ENCODE measurements at regions of chr6 and their contacts with region 1.

Region 1: DNA sequence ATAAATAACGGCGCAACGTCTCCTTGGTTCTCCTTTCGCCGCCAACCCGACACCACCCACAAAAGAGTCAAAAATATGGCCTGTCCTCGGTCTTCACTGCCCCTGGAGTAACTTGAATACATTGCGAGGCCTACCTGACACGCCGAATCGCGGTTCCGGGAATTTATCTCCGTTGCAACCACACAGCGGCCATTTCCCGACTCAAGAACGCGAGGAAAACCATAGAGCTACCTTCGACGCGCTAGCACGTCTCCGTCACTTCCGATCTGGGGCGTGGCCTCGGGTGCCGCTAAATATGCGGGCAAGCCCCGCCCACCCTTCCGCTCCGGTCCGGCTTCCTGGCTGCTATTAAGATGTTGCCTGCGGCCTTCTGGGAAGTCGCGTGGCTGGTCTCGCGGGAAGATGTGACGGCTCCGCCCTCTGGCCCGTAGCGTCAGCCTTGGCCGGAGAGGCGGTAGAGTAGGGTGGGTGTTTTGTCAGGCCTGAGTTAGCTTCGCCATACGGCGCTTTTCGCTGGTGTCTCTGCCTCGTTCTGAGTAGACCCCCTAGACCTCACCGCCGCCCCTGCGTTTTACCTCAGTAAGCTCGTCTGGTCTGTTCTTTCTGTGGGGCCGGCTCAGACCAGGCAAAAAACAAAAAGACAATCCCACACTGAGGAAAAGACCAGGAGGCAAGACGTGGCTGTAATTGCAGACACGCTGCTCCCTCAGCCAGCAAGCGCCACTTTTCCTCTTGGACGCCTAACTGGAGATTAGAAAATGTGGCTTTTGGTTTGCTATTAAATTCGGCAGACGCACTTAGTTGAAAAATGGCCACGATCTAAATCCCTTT is at the start of gene BCLAF1:
- DNase-seq: peak; percentile 95 to 100 (median 96)
- ATAC-seq: peak; percentile 93
- H3K4me3 ChIP-seq: peak within 1 kb of the TSS; percentile 75
- H3K27ac ChIP-seq: peak within 1 kb of the TSS; percentile 100
- H3K4me1 ChIP-seq: peaks cover 13 to 14% of the 10 kb centered on the region in 2 experiments
- H3K27me3 ChIP-seq: no peaks in the 10 kb centered on the region
- CTCF ChIP-seq: no peak
- EP300 ChIP-seq: peak; percentile 37; the same call in 1 of the 2 replicates
- POLR2A ChIP-seq: peak; percentile 99
- RAD21 ChIP-seq: peak in 1 of 2 experiments; percentile 30; a peak in 1 of 4 replicates
- polyA plus RNA-seq, gene BCLAF1: 65.4 to 87.3 TPM

Region 2: GRCh38 chr6:136160250-136160649 is 129.5 kb before region 1 on chr6:
- CTCF ChIA-PET with region 1: no interaction called
- POLR2A ChIA-PET with region 1: no interaction called
- in situ Hi-C with region 1: no loop called
- intact Hi-C with region 1: no loop called
- DNase-seq: no peak
- ATAC-seq: no peak
- H3K4me3 ChIP-seq: no peak overlapping the region
- H3K27ac ChIP-seq: no peak overlapping the region
- H3K4me1 ChIP-seq: no peaks in the 10 kb centered on the region
- H3K27me3 ChIP-seq: peaks cover 4 to 10% of the 10 kb centered on the region in 2 experiments; a peak in 4 of 5 replicates
- CTCF ChIP-seq: no peak
- EP300 ChIP-seq: no peak
- POLR2A ChIP-seq: no peak
- RAD21 ChIP-seq: no peak

Region 3: GRCh38 chr6:136235217-136235532 is 54.6 kb before region 1 on chr6:
- CTCF ChIA-PET with region 1: no interaction called
- POLR2A ChIA-PET with region 1: interaction called, 74 read pairs
- in situ Hi-C with region 1: no loop called
- intact Hi-C with region 1: loop called (anchors 2 kb)
- DNase-seq: no peak
- ATAC-seq: no peak
- H3K4me3 ChIP-seq: no peak overlapping the region
- H3K27ac ChIP-seq: peak overlapping the region; percentile 10; the same call in 1 of the 3 replicates
- H3K4me1 ChIP-seq: peaks cover 17 to 37% of the 10 kb centered on the region in 2 experiments
- H3K27me3 ChIP-seq: no peaks in the 10 kb centered on the region
- CTCF ChIP-seq: no peak
- EP300 ChIP-seq: no peak
- POLR2A ChIP-seq: no peak
- RAD21 ChIP-seq: no peak

Region 4: GRCh38 chr6:136262940-136263339 is 26.9 kb before region 1 on chr6:
- CTCF ChIA-PET with region 1: no interaction called
- POLR2A ChIA-PET with region 1: interaction called, 176 read pairs
- in situ Hi-C with region 1: no loop called
- intact Hi-C with region 1: no loop called
- DNase-seq: no peak
- ATAC-seq: no peak; the same call in 2 of the 3 replicates
- H3K4me3 ChIP-seq: no peak overlapping the region
- H3K27ac ChIP-seq: no peak overlapping the region
- H3K4me1 ChIP-seq: no peaks in the 10 kb centered on the region
- H3K27me3 ChIP-seq: no peaks in the 10 kb centered on the region
- CTCF ChIP-seq: no peak
- EP300 ChIP-seq: no peak
- POLR2A ChIP-seq: no peak
- RAD21 ChIP-seq: no peak

Region 5: GRCh38 chr6:136306466-136306865 is 16.7 kb after region 1 on chr6:
- CTCF ChIA-PET with region 1: no interaction called
- POLR2A ChIA-PET with region 1: interaction called, 55 read pairs
- in situ Hi-C with region 1: no loop called
- intact Hi-C with region 1: no loop called
- DNase-seq: no peak
- ATAC-seq: no peak
- H3K4me3 ChIP-seq: no peak overlapping the region
- H3K27ac ChIP-seq: no peak overlapping the region
- H3K4me1 ChIP-seq: peaks cover 0 to 4% of the 10 kb centered on the region in 2 experiments; a peak in 2 of 5 replicates
- H3K27me3 ChIP-seq: no peaks in the 10 kb centered on the region; a peak in 1 of 5 replicates
- CTCF ChIP-seq: no peak
- EP300 ChIP-seq: no peak
- POLR2A ChIP-seq: no peak
- RAD21 ChIP-seq: no peak

Region 6: DNA sequence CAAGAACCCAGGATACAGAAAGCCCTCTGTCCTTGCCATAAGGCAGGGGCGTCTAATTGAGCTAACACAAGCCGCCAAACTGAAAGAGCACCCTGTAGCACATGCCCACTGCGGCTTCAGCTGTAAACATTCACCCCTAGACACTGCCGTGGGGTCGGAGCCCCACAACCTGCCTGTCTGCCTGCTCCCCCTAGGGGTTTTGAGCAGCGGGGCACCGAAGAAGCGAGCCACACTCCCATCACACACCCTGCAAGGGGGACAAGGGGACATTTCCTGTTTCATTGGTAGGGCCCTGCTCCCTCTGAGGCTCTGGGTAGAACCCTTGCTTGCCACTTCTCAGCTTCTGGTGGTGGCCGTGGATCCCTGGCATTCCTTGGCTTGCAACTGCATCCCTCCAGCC is 45.1 kb after region 1 on chr6:
- CTCF ChIA-PET with region 1: no interaction called
- POLR2A ChIA-PET with region 1: interaction called, 16 read pairs
- in situ Hi-C with region 1: no loop called
- intact Hi-C with region 1: no loop called
- DNase-seq: peak in 1 of 4 experiments; percentile 58
- ATAC-seq: peak; percentile 81
- H3K4me3 ChIP-seq: no peak overlapping the region
- H3K27ac ChIP-seq: no peak overlapping the region
- H3K4me1 ChIP-seq: peaks cover 11 to 21% of the 10 kb centered on the region in 2 experiments; a peak in 4 of 5 replicates
- H3K27me3 ChIP-seq: peaks cover 3 to 23% of the 10 kb centered on the region in 2 experiments
- CTCF ChIP-seq: peak; percentile 53 to 62 (median 60)
- EP300 ChIP-seq: no peak
- POLR2A ChIP-seq: no peak
- RAD21 ChIP-seq: peak in 1 of 2 experiments; percentile 44; a peak in 2 of 4 replicates

Region 7: GRCh38 chr6:136579800-136580199 is 290.0 kb after region 1 on chr6:
- CTCF ChIA-PET with region 1: no interaction called
- POLR2A ChIA-PET with region 1: no interaction called
- in situ Hi-C with region 1: no loop called
- intact Hi-C with region 1: no loop called
- DNase-seq: no peak
- ATAC-seq: no peak
- H3K4me3 ChIP-seq: no peak overlapping the region
- H3K27ac ChIP-seq: no peak overlapping the region
- H3K4me1 ChIP-seq: no peaks in the 10 kb centered on the region
- H3K27me3 ChIP-seq: no peaks in the 10 kb centered on the region
- CTCF ChIP-seq: no peak
- EP300 ChIP-seq: no peak
- POLR2A ChIP-seq: no peak
- RAD21 ChIP-seq: no peak

Region 8: DNA sequence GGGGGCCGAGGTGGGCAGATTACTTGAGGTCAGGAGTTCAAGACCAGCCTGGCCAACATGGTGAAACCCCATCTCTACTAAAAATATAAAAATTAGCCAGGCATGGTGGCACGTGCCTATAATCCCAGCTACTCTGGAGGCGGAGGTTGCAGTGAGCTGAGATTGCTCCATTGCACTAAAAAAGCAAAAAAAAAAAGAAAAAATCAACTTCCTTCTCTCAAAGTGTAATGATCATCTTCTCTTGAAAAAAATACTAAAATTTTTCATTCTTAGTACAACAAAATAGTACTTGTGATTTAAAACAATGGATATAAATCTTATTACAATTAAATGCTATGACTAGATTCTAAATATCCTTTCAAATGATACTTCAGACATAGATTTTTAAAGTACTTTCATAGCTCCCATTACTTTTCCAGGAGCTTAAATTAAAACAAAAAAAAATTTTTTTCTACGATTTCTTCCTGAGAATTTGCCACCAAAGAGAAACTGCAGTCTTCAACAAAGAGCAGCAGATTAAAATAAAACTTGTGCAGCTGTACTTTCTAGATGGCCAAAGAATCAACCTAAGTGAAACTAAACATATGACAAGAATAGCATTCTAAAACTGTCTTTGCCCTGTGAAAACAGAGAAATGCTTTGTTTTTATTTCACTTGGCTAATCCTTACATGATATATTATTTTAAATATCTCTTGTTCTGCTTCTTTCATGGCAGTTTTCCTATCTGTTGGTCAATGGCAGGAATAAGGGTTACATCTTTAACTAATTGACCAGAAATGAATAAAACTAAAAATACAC is 427.3 kb after region 1 on chr6:
- CTCF ChIA-PET with region 1: no interaction called
- POLR2A ChIA-PET with region 1: no interaction called
- in situ Hi-C with region 1: no loop called
- intact Hi-C with region 1: no loop called
- DNase-seq: no peak
- ATAC-seq: no peak
- H3K4me3 ChIP-seq: no peak overlapping the region
- H3K27ac ChIP-seq: no peak overlapping the region
- H3K4me1 ChIP-seq: peaks cover 2 to 7% of the 10 kb centered on the region in 2 experiments; a peak in 3 of 5 replicates
- H3K27me3 ChIP-seq: no peaks in the 10 kb centered on the region
- CTCF ChIP-seq: no peak
- EP300 ChIP-seq: no peak
- POLR2A ChIP-seq: no peak
- RAD21 ChIP-seq: no peak

Measured in K562 (cell line).